HEK293 (cell line): ENCODE measurements at regions of chr3 and their contacts with region 1.

Region 1: DNA sequence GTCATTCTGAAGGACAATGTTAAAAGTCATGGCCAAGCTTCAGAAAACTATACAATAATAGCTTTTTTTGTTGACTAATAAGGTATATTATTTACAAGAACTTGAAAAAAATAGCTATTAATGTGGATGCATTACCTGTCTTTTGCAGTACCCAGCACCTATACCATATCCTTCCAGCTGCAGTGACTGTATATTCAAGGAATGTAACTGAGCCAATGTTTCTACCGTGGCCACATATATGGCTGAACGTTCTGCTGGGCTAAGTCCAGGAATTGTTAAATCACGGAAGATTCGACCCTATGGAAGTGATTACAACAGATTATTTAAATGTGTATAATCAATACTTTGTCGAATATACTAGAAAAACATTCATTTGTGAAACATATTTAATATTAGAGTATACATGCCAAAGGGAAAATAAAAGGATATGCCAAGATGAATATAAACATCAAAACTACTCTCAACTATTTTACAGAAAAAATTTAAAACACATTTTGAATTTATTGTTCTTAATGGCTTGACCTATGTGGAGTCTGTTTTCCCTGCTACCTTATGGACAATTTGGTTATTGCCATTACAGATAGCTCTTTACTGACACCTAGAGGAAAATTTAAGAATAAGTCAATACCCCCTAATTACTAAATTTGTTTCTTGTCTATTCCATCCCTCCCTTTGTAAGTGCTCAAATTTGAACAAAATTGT is 17.6 kb downstream of the ACAD11 start:
- H3K4me3 ChIP-seq: no peak overlapping the region
- H3K27ac ChIP-seq: no peak overlapping the region
- H3K4me1 ChIP-seq: no peaks in the 10 kb centered on the region
- CTCF ChIP-seq: no peak

Region 2: GRCh38 chr3:132399054-132399929 is 242.7 kb before region 1 on chr3:
- CTCF ChIA-PET with region 1: interaction called, 11 read pairs
- POLR2A ChIA-PET with region 1: no interaction called
- H3K4me3 ChIP-seq: no peak overlapping the region
- H3K27ac ChIP-seq: no peak overlapping the region
- H3K4me1 ChIP-seq: no peaks in the 10 kb centered on the region
- CTCF ChIP-seq: peak; percentile 32; the same call in 1 of the 2 replicates

Region 3: GRCh38 chr3:132535575-132536441 is 106.2 kb before region 1 on chr3:
- CTCF ChIA-PET with region 1: interaction called, 28 read pairs
- POLR2A ChIA-PET with region 1: no interaction called
- H3K4me3 ChIP-seq: no peak overlapping the region
- H3K27ac ChIP-seq: no peak overlapping the region
- H3K4me1 ChIP-seq: no peaks in the 10 kb centered on the region
- CTCF ChIP-seq: no peak